ENCODE measurements at regions of chr20 and their contacts with region 1.

Region 1: GRCh38 chr20:4082406-4083097 is 67.2 kb upstream of the RNF24 start:
- DNase-seq: peak; percentile 67
- H3K4me3 Mint-ChIP-seq: peak overlapping the region; percentile 42
- H3K27ac Mint-ChIP-seq: peak overlapping the region; percentile 89
- H3K4me1 Mint-ChIP-seq: peaks cover 45% of the 10 kb centered on the region
- H3K27me3 Mint-ChIP-seq: no peaks in the 10 kb centered on the region

Region 2: DNA sequence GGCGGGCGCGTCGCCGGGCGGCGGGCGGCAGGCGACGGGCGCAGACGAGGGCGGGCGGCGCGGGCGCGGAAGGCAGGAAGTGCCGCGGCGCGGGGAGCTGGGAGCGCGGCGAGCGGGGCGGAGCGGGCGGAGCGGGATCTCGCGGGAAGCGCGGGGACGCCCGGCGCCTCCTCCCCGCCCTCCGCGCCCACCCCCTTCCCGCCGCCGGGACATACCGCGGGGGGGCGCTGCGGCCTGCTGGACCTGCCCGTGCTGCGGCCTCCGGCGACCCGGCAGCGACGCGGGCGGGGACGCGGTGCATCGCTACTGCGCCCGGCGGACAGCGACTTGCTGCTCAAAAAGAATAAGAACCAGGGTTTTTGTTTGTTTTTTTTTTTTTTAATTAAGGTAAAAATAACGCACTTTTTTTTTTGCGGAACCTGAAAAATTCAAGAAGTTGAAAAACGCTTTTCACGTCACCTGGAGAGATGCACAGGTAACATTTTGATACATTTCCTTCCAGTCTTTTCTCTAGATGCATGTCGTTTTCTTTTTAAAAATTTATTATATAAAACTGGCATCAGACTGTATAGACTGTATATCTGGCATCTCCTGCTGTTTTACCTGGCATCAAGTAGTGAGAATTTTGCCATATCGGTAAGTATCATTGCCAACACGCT is 295.8 kb before region 1 on chr20 and contains the start of gene CENPB:
- CTCF ChIA-PET with region 1: interaction called, 9 read pairs
- POLR2A ChIA-PET with region 1: no interaction called
- intact Hi-C with region 1: loop called (anchors 10 kb)
- DNase-seq: peak; percentile 93
- H3K4me3 Mint-ChIP-seq: peak within 1 kb of the TSS; percentile 83
- H3K27ac Mint-ChIP-seq: peak within 1 kb of the TSS; percentile 79
- H3K4me1 Mint-ChIP-seq: peaks cover 38% of the 10 kb centered on the region
- H3K27me3 Mint-ChIP-seq: no peaks in the 10 kb centered on the region
- total RNA-seq, gene CENPB: 50.1 to 51.9 TPM

Region 3: DNA sequence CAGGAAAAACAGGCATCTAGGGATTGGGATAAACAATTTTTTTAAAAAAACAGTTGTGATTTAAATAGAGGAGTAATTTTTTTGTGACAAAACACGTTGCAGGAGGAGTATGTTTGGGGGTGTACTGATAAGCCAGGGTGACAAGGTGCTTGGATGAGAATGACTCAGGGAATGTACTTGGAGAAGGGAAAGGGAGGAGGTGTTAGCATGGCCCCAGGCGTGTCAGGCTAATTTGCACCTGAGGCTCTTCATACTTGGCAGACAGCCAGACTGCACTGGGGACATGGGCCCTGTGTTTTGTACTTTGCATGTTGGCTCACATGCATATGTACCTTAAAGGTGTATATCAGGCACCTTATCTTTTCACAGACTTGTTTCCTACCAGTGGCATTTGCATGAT is 170.6 kb before region 1 on chr20:
- CTCF ChIA-PET with region 1: no interaction called
- POLR2A ChIA-PET with region 1: no interaction called
- intact Hi-C with region 1: loop called (anchors 5 kb)
- DNase-seq: peak; percentile 8
- H3K4me3 Mint-ChIP-seq: no peak overlapping the region
- H3K27ac Mint-ChIP-seq: peak overlapping the region; percentile 9
- H3K4me1 Mint-ChIP-seq: peaks cover 52% of the 10 kb centered on the region
- H3K27me3 Mint-ChIP-seq: no peaks in the 10 kb centered on the region

Region 4: DNA sequence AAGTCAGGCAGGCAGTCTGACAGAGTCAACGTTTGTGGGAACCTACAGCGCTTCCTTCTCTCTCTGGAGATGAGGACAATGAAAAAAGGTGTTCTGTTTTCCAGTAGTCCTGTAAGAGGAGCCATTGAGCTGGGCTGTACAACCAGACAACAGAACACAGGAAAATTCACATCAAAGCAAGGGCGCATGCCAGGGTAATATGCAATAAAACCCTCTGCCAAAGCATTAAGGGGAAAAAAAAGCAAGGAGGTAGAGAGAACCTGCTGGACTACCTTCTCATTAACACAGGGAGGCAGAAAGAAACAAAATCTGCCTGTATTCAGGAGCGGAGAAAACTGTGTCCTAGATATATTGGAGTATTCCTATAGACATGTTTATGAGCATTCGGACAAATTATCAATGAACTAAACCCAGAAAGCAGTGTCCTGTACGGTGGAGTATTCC is 68.5 kb before region 1 on chr20:
- CTCF ChIA-PET with region 1: interaction called, 18 read pairs
- POLR2A ChIA-PET with region 1: no interaction called
- intact Hi-C with region 1: loop called (anchors 1 kb)
- DNase-seq: peak; percentile 28
- H3K4me3 Mint-ChIP-seq: peak overlapping the region; percentile 86
- H3K27ac Mint-ChIP-seq: no peak overlapping the region
- H3K4me1 Mint-ChIP-seq: peaks cover 36% of the 10 kb centered on the region
- H3K27me3 Mint-ChIP-seq: no peaks in the 10 kb centered on the region

Region 5: DNA sequence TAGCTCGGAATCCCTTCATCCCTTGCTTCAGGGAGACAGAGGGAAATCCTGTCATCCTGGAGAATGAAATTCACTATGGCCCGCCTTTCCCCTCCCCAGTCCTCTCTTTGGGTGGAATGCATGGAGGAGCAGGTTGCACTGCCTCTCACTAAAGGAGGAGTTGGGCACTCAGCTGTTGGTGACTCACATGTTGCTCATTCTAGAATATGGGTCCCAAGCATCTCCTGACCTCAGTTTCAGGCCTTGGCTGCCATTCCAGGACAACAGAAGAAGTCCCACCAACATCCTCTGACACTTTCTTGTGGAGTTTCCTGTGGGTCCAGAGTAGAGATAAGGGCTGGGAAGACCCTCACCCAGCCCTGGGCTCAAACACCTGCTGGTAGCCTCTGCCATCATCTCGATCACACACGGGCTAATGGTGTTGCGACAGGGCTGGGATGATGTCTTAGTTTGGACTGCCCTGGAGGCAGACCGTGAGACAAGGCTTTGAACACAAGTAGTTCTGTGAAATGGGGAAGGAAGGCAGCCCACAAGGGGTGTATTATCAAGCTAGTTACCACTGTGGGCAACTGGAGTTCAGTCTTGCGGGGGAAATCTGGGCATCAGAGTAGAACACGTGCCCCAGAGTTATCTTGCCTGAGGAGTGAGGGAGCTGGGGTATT is 14.8 kb before region 1 on chr20:
- CTCF ChIA-PET with region 1: interaction called, 9 read pairs
- POLR2A ChIA-PET with region 1: no interaction called
- intact Hi-C with region 1: loop called (anchors 2 kb)
- DNase-seq: no peak
- H3K4me3 Mint-ChIP-seq: no peak overlapping the region
- H3K27ac Mint-ChIP-seq: no peak overlapping the region
- H3K4me1 Mint-ChIP-seq: peaks cover 2% of the 10 kb centered on the region
- H3K27me3 Mint-ChIP-seq: no peaks in the 10 kb centered on the region